Ascending aorta (tissue), 2 donors: ENCODE measurements at regions of chr7 and their contacts with region 1.

Region 1: GRCh38 chr7:87345166-87345927 is at the start of gene CROT:
- DNase-seq: peak; percentile 89 to 98
- H3K4me3 ChIP-seq: peak within 1 kb of the TSS; percentile 52 to 73
- H3K27ac ChIP-seq: peak within 1 kb of the TSS; percentile 74 to 83
- H3K4me1 ChIP-seq: peaks cover 0 to 11% of the 10 kb centered on the region in 2 donors
- H3K27me3 ChIP-seq: no peaks in the 10 kb centered on the region
- CTCF ChIP-seq: peak in 1 of 3 experiments; percentile 8
- total RNA-seq, gene CROT: 3.0 TPM

Region 2: GRCh38 chr7:86939197-86939814 is 406.0 kb before region 1 on chr7:
- intact Hi-C with region 1: loop called (anchors 10 kb)
- DNase-seq: no peak
- H3K4me3 ChIP-seq: no peak overlapping the region
- H3K27ac ChIP-seq: no peak overlapping the region
- H3K4me1 ChIP-seq: no peaks in the 10 kb centered on the region
- H3K27me3 ChIP-seq: no peaks in the 10 kb centered on the region
- CTCF ChIP-seq: peak; percentile 38 to 62 (median 61)

Region 3: GRCh38 chr7:87219545-87220025 is 125.8 kb before region 1 on chr7 and contains the start of gene TMEM243:
- intact Hi-C with region 1: loop called (anchors 5 kb)
- DNase-seq: peak; percentile 39 to 90
- H3K4me3 ChIP-seq: peak within 1 kb of the TSS; percentile 95 to 98
- H3K27ac ChIP-seq: peak within 1 kb of the TSS; percentile 90 to 91
- H3K4me1 ChIP-seq: peaks cover 2 to 8% of the 10 kb centered on the region in 2 donors
- H3K27me3 ChIP-seq: no peaks in the 10 kb centered on the region
- CTCF ChIP-seq: peak in 1 of 3 experiments; percentile 5
- total RNA-seq, gene TMEM243: 27.5 TPM

Region 4: GRCh38 chr7:87267239-87267900 is 78.0 kb before region 1 on chr7:
- intact Hi-C with region 1: no loop called
- DNase-seq: no peak
- H3K4me3 ChIP-seq: no peak overlapping the region
- H3K27ac ChIP-seq: no peak overlapping the region
- H3K4me1 ChIP-seq: no peaks in the 10 kb centered on the region
- H3K27me3 ChIP-seq: no peaks in the 10 kb centered on the region
- CTCF ChIP-seq: no peak

Region 5: DNA sequence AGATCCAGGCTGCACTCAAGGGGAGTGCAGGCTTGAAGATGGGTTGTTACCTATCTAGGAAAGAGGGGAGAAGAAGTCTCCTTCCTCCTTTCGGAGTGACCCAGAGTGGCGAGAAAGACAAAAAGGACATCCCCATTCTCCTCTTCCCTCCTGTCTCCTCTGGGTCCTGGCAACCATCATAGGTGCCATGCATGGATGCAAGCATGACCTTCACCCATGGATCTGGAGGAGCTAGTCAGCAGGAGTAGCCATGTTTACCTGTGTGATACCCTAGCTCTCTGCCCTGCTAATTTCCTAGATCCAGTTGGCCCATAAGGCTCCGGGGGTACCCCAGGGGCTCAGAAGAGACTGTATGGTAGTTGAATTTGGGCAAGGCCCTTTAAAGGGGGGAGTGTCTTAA is 17.1 kb before region 1 on chr7:
- intact Hi-C with region 1: no loop called
- DNase-seq: no peak
- H3K4me3 ChIP-seq: no peak overlapping the region
- H3K27ac ChIP-seq: no peak overlapping the region
- H3K4me1 ChIP-seq: no peaks in the 10 kb centered on the region
- H3K27me3 ChIP-seq: no peaks in the 10 kb centered on the region
- CTCF ChIP-seq: no peak

Region 6: GRCh38 chr7:87416682-87417587 is 71.6 kb after region 1 on chr7:
- intact Hi-C with region 1: loop called (anchors 1 kb)
- DNase-seq: peak in 1 of 2 donors; percentile 73
- H3K4me3 ChIP-seq: no peak overlapping the region
- H3K27ac ChIP-seq: no peak overlapping the region
- H3K4me1 ChIP-seq: peaks cover 0 to 3% of the 10 kb centered on the region in 2 donors
- H3K27me3 ChIP-seq: no peaks in the 10 kb centered on the region
- CTCF ChIP-seq: peak; percentile 40 to 70 (median 50)

Region 7: GRCh38 chr7:87628780-87629569 is 283.6 kb after region 1 on chr7:
- intact Hi-C with region 1: loop called (anchors 5 kb)
- DNase-seq: no peak
- H3K4me3 ChIP-seq: peak overlapping the region; percentile 66 to 71
- H3K27ac ChIP-seq: no peak overlapping the region
- H3K4me1 ChIP-seq: peaks cover 2 to 5% of the 10 kb centered on the region in 2 donors
- H3K27me3 ChIP-seq: no peaks in the 10 kb centered on the region
- CTCF ChIP-seq: no peak

Region 8: DNA sequence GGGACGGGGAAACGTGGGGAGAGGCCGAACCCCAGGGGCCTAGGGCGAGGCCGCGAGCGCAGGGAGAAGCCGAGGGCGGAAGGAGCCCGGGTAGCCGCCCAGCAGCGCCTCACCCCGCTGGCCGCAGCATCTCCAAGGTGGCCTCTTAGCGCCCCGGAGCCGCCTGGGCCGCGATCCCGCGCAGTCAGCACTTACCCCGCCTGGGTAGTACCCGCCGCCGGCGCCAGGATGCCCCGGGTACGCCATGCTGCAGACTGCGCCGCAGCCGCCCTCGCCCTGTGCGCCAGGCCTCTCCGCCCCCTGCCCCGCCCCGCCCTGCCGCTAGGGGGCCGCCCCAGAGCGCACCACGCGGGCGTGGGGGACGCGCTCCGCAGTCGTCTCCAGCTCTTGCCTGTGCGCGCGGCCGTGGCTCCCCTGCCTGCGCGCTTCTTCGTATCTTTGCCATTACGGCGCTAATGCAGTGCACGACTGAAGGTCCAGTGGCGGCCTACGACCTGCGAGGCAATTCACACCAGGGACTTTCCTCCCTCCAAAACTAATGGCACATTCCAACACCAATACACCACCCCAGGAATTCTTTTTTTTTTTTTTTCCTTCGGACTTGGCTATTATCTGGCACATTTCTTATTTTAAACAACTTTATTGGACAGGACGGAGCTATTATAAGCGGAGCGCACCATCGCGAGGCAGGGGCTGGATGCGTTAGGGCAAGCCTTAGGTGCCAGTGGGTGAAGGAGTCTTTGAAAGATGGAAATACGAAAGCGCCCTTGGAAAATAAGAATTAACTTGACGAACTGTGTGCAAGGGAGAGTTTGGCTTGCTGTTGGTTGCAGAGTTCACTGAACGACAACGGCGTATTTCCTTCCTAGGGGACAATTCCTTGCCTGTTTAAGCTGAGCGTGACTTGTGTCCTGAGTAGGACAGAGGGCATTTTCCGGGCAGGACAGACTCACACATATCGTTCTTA is 874.7 kb after region 1 on chr7 and contains the start of gene SRI:
- intact Hi-C with region 1: loop called (anchors 10 kb)
- DNase-seq: peak; percentile 40 to 93
- H3K4me3 ChIP-seq: peak within 1 kb of the TSS; percentile 82 to 88
- H3K27ac ChIP-seq: peak within 1 kb of the TSS; percentile 86 to 89
- H3K4me1 ChIP-seq: peaks cover 6 to 7% of the 10 kb centered on the region in 2 donors
- H3K27me3 ChIP-seq: no peaks in the 10 kb centered on the region
- CTCF ChIP-seq: peak; percentile 58 to 88 (median 80)
- total RNA-seq, gene SRI: 16.7 TPM